Psoas muscle (tissue), 8 donors: ENCODE measurements at regions of chr2 and their contacts with region 1.

Region 1: DNA sequence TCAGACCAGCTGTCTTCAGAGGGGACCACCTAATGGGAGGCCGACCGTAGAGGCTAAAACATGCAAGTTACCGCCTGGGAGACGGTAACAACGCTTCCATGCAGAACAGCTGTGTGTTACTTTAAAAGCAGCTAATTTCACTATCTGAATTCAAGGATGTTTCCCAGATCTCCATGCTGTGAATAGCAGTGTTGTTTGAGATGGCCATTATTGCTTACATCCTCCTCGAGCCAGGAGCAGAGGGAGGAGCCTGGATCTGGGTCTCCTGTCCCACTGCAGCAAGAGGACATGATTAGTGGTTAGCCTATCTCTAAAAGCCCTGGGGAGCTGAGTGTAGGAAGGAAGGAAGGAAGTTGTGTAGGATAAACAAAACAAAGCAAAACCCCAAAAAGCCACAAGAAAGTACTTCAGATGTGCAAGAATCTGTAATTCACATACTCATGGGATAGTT is 50.9 kb downstream of the ACTR2 start:
- DNase-seq: no peak
- ATAC-seq: no peak
- H3K4me3 ChIP-seq: no peak overlapping the region
- H3K27ac ChIP-seq: no peak overlapping the region
- H3K4me1 ChIP-seq: peaks cover 6% of the 10 kb centered on the region
- H3K27me3 ChIP-seq: peaks cover 0 to 7% (median 0%) of the 10 kb centered on the region in 3 donors
- CTCF ChIP-seq: no peak

Region 2: DNA sequence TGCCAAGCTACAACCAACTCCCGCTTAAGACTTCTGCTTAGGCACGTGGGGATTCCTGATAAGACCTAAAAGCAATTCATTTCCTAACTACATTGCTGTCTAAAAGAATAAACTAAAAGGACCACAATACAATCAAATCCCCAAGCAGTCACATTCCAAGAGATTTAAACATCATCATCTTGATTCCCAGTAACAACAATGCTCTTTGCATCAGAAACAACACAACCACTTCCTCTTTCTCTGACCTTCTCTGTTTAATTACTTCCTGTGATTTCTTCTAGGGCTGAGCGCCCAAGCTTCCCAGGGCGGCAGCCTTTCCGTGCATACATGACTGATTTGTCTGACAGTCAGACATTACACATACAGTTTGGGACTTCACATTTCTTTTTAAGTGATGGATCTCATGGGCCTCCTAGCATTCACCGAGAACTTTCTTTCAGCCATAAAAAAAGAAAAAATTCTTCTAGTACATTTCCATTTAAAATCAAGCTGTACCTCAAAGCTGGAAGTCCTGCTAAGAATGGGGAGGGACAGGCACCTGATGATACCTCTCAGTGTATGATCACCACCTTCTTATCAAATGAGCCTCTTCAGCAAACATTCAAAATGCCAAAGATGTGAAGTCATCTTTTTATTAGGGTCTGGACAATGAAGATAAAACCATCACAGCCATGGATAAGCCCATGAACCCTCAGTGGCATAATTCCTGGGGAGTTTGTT is 142.3 kb after region 1 on chr2:
- intact Hi-C with region 1: loop called in 1 of 2 experiments (anchors 5 kb)
- DNase-seq: no peak
- ATAC-seq: peak in 1 of 4 donors; percentile 38
- H3K4me3 ChIP-seq: no peak overlapping the region
- H3K27ac ChIP-seq: no peak overlapping the region
- H3K4me1 ChIP-seq: peaks cover 11% of the 10 kb centered on the region
- H3K27me3 ChIP-seq: no peaks in the 10 kb centered on the region
- CTCF ChIP-seq: no peak